ENCODE measurements at regions of chr12 and their contacts with region 1.

Region 1: DNA sequence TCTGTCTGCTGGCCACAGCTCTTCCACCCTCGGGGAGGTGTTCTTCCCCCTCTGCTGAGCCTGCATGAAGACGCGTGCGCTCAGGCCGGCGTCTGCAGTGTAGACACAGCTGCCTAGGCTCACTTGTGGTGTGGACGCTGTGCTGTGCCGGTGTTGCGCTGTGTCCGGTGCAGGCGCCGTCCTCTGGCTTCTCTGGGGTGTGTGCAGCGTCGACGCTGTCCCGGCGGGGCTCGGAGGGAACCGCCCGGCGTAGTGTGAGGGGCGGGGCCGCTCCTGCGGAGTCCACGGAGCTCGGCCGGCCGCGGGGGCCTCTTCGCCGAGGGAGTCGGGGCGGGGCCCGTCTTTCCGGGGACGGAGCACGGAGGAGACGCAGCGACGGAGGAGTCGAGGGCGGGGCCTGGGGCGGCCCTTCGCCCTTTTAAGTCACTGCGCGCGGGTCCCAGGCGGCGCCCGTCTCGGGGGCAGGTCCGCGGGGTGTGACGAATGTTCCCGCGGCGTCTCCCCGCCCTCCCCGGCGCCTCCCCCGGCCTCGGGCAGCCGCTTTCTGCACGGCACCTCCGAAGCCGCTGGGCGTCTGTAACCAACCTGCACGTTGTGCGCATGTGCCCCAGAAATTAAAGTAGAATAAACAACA is 45.2 kb downstream of the NOC4L start:
- DNase-seq: peak; percentile 96
- ATAC-seq: peak; percentile 95
- H3K4me3 Mint-ChIP-seq: peak overlapping the region; percentile 90
- H3K27ac Mint-ChIP-seq: peak overlapping the region; percentile 86
- H3K4me1 Mint-ChIP-seq: peaks cover 50% of the 10 kb centered on the region
- H3K27me3 Mint-ChIP-seq: peaks cover 1% of the 10 kb centered on the region

Region 2: DNA sequence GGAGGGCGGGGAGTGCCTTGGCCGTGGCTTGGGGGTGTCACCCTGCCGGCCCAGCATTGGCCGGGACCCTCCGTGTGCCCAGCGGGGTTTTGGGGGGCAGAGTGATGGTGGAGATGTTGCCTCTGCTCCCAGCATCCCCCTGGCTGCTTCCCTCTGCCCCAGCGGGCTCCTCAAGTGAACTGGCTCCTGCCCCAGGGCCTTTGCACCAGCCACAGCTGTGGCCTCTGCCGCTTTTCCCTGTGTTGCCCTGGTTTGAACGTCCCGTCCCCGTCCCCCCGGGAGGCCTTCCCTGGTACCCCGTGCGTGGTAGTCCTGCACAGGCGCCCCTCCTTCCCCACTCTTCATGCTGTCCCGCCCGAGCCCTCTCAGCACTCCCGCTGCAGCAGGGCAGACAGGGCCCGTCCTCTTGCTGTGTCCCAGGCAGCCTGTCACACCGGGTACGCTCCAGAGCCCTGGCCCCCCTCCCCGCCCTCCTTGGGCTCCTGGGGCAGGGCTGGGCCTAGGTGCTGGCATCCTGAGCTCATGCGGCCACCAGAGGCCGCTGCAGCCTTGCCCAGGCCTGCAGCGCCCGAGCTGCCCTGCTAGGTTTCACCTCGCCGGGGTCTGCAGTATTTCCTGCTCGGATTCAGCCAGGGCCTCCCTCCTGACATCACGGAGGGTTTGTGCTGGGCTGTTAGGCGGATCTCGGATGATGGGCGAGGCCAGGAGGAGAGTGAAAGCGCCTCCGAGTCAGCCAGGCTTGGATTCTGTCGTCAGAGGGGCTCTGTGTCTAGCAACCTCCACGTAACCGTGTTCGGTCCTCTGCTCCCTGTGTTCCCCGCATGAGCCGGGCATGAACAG is 35.8 kb before region 1 on chr12:
- CTCF ChIA-PET with region 1: interaction called, 13 read pairs
- POLR2A ChIA-PET with region 1: no interaction called
- DNase-seq: peak; percentile 83
- ATAC-seq: peak; percentile 90
- H3K4me3 Mint-ChIP-seq: no peak overlapping the region
- H3K27ac Mint-ChIP-seq: peak overlapping the region; percentile 49
- H3K4me1 Mint-ChIP-seq: peaks cover 2% of the 10 kb centered on the region
- H3K27me3 Mint-ChIP-seq: no peaks in the 10 kb centered on the region